ENCODE measurements at regions of chr7 and their contacts with region 1.

Region 1: DNA sequence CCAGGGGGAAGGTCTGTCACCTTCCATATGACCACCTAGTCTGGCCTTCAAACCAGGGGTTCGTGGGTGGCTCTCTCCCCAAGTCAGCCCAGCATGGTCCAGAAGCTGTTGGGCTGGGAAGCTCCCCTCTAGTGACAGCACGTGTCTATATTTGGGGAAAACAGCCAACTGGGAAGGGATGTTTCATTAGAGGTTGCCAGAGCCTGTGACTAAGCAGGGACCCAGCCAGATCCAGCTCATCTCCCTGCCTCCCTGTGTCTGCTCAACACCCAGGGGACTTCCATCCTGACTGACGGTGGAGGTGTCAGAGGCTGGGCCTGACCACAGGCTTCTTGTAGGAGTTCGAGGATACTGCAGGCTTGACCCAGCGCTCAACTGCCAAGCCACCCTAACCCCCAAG is 10.5 kb downstream of the STYXL1 start:
- DNase-seq: peak; percentile 92
- ATAC-seq: peak; percentile 95
- H3K4me3 ChIP-seq: no peak overlapping the region
- H3K27ac ChIP-seq: peak overlapping the region; percentile 28
- H3K4me1 ChIP-seq: peaks cover 6% of the 10 kb centered on the region
- H3K27me3 ChIP-seq: no peaks in the 10 kb centered on the region
- CTCF ChIP-seq: no peak
- POLR2A ChIP-seq: no peak
- RAD21 ChIP-seq: no peak

Region 2: GRCh38 chr7:76086070-76086469 is 48.8 kb after region 1 on chr7:
- CTCF ChIA-PET with region 1: no interaction called
- POLR2A ChIA-PET with region 1: interaction called, 12 read pairs
- dilution Hi-C with region 1: no loop called
- in situ Hi-C with region 1: no loop called
- intact Hi-C with region 1: no loop called
- DNase-seq: peak; percentile 59
- ATAC-seq: no peak
- H3K4me3 ChIP-seq: no peak overlapping the region
- H3K27ac ChIP-seq: no peak overlapping the region
- H3K4me1 ChIP-seq: peaks cover 20% of the 10 kb centered on the region
- H3K27me3 ChIP-seq: no peaks in the 10 kb centered on the region
- CTCF ChIP-seq: no peak
- POLR2A ChIP-seq: no peak
- RAD21 ChIP-seq: no peak

Region 3: DNA sequence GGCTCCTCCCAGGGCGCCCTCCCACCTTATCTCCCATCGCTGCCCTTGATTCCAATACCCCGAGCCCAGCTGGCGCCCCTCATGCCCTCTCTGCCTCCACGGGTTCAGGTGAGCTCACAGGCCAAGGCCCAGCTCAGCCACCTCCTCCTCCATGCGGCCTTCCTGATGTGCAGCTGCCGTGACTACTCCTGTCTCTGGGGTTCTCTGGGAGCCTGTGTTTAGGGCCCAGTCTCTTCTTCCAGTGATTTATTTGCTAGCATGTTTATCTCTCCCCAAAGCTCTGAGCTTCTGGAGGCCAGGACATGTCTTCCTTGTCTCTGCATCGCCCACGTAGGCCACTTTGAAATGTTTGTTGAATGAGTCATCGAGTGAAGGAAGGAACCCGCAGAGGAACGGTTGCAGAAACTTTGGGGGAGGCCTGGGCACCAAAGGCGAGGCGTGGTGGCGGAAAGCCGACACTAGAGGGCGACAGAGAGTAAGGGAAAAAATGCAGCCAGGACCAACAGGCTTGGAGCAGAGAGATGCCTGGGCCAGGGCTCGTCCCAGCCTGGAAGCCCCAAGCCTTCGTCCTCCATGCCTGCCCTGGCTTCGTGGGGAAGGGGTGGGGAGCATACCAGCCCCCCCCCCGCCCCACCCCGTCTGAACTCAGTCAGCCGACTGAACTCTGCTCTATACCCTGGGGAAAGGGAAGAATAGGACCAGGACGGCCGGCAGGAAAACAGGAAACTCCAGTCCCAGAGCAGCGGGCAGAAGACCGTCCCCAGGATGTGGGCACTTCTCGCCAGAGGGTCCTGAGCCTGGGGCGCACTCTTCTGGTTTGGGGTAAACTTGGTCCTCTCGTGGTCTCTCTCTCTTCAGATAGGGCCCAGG is 254.3 kb after region 1 on chr7:
- CTCF ChIA-PET with region 1: no interaction called
- POLR2A ChIA-PET with region 1: no interaction called
- dilution Hi-C with region 1: no loop called
- in situ Hi-C with region 1: no loop called
- intact Hi-C with region 1: no loop called
- DNase-seq: peak; percentile 99
- ATAC-seq: peak; percentile 82
- H3K4me3 ChIP-seq: no peak overlapping the region
- H3K27ac ChIP-seq: peak overlapping the region; percentile 92
- H3K4me1 ChIP-seq: peaks cover 22% of the 10 kb centered on the region
- H3K27me3 ChIP-seq: no peaks in the 10 kb centered on the region
- CTCF ChIP-seq: peak; percentile 99
- POLR2A ChIP-seq: peak; percentile 62; the same call in 1 of the 2 replicates
- RAD21 ChIP-seq: peak; percentile 94

Measured in IMR-90 (cell line).